Ascending aorta (tissue), 2 donors: ENCODE measurements at regions of chr10 and their contacts with region 1.

Region 1: GRCh38 chr10:125060826-125061556 is 99.4 kb downstream of the CTBP2 start:
- DNase-seq: peak; percentile 67 to 96
- H3K4me3 ChIP-seq: peak overlapping the region in 1 of 2 donors; percentile 47
- H3K27ac ChIP-seq: peak overlapping the region; percentile 99
- H3K4me1 ChIP-seq: peaks cover 59 to 90% of the 10 kb centered on the region in 2 donors
- H3K27me3 ChIP-seq: no peaks in the 10 kb centered on the region
- CTCF ChIP-seq: peak; percentile 81 to 91 (median 85)

Region 2: DNA sequence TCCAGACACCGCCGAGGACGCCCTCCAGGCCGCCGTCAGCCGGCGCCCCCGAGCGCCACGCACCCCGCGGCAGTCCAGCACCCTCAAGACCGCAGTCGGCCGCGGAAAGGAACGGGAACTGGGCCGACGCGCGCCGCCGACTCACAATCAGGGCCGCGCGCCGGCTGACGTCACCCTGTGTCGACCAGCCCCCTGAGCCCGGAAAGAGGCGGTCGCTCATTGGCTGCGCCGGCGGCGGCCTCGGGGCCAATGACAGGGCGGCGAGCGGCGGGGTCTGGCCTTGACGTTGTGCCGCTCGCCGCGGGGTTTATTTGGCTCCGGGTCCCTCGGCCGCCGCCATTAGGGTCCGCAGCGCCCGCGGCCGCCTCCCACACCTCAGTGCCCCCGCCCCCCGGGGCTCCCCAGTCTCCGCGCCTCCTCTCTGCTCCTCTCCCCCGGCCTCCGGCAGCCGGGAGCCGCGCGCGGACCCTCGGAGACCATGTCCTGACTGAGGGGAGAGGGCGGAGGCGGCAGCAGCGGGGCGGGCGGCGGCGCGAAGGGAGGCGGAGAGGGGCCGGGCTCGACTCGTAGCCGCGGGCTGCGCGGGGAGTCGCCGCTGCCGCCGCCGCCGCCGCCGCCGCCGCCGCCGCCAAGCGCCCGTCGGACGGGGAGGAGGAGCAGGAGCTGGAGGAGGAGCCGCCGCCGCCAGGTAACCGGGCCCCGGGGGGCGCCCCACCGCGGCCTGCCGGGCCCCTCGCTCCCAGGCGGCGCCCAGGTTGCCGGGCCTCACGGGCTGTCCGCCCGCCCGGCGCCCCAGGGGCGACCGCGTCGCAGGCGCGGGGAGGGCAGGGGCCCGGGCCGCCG is 144.2 kb before region 1 on chr10:
- intact Hi-C with region 1: loop called (anchors 1 kb)
- DNase-seq: peak; percentile 91 to 99
- H3K4me3 ChIP-seq: peak overlapping the region; percentile 95 to 96
- H3K27ac ChIP-seq: peak overlapping the region; percentile 98
- H3K4me1 ChIP-seq: peaks cover 3 to 29% of the 10 kb centered on the region in 2 donors
- H3K27me3 ChIP-seq: no peaks in the 10 kb centered on the region
- CTCF ChIP-seq: peak in 1 of 3 experiments; percentile 6

Region 3: DNA sequence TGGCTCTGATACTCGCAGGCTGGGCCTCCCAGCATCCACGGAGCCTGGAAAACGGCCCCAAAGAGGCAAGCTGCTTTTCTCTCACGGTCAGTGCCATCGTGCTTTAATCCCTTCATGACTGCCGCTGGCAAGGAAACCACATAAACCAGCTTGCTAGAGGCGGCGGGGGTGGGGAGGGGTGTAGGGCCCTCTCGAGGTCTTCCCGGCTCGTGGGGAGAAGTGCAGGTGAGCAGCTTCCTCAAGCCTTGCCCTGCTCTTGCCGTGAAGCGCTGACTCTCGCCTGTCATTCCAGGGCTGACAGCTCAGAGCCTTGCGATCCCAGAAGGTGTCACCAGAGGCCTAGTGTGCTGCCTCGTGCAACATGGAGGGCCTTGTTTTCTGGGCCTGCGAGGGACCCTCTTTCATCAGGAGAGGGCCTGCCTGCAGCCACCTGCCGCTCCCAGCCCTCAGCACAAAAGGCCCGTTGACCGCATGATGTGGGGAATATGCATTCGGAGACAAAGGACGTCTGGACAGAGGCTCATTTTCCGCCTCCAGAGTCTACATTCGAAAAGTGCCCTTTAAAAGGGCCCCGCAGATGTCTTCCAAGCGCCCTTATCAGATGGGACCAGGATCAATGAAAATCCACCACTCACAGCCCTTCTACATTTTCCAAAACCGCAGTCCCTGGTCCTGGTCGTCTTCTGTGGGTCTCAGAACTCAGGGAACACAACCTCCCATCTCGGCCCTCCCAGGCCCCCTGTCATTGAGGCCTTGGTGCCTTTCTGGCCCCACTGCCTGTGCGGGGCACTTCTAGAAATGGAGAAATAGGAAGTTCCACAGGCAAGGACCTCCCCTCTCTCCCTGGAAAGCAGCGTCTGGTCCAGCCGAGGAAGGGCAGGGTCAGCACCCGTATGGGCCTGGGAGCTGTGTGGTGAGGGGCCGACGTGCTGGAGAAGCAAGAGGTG is 60.4 kb before region 1 on chr10:
- intact Hi-C with region 1: loop called (anchors 2 kb)
- DNase-seq: peak in 1 of 2 donors; percentile 70
- H3K4me3 ChIP-seq: peak overlapping the region; percentile 34 to 54
- H3K27ac ChIP-seq: peak overlapping the region; percentile 94 to 98
- H3K4me1 ChIP-seq: peaks cover 35 to 57% of the 10 kb centered on the region in 2 donors
- H3K27me3 ChIP-seq: no peaks in the 10 kb centered on the region
- CTCF ChIP-seq: peak in 2 of 3 experiments; percentile 14 to 29

Region 4: DNA sequence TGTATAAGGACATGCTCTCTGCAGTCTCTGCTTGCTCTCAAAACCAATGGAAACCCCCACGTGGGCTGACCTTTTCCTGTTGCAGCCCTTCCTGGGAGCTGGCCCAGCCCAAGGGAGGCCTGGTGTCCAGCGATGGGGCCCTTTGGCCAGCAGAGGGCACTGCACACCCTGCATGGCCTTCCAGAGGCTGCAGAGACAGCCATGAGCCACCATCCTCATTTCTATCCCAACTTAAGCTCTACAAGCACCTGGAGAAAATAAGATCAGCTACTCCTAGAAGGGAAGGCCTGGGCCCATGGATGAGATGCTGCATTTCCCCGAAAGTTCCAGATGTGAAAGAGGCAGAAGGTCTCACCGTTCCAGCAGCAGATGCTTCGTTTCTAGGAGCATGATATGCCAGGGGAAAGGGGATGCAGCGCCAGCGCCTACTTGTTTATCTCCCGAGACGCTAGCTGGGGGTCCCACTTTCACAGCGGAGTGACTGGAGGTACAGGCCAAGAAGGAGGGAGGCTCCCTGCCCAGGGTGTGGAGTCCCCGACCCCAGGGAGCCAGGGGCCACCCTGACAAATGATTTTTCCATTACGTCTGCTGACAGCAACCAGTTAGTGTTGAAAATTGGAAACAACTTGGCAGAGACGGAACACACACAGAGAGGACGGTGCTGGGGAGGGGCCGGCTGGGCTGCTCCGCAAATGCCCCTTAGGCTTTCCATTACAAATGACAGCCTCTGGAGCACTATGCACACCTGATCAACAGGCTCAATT is 12.7 kb before region 1 on chr10:
- intact Hi-C with region 1: loop called (anchors 1 kb)
- DNase-seq: peak; percentile 24 to 92
- H3K4me3 ChIP-seq: peak overlapping the region in 1 of 2 donors; percentile 45
- H3K27ac ChIP-seq: peak overlapping the region; percentile 55 to 67
- H3K4me1 ChIP-seq: peaks cover 22 to 67% of the 10 kb centered on the region in 2 donors
- H3K27me3 ChIP-seq: no peaks in the 10 kb centered on the region
- CTCF ChIP-seq: peak; percentile 92 to 97 (median 96)

Region 5: GRCh38 chr10:125144693-125145623 is 84.0 kb after region 1 on chr10:
- intact Hi-C with region 1: loop called (anchors 2 kb)
- DNase-seq: no peak
- H3K4me3 ChIP-seq: no peak overlapping the region
- H3K27ac ChIP-seq: peak overlapping the region; percentile 30 to 89
- H3K4me1 ChIP-seq: peaks cover 29 to 71% of the 10 kb centered on the region in 2 donors
- H3K27me3 ChIP-seq: no peaks in the 10 kb centered on the region
- CTCF ChIP-seq: peak; percentile 22 to 52 (median 24)

Region 6: GRCh38 chr10:125411724-125412123 is 350.7 kb after region 1 on chr10:
- intact Hi-C with region 1: no loop called
- DNase-seq: no peak
- H3K4me3 ChIP-seq: no peak overlapping the region
- H3K27ac ChIP-seq: no peak overlapping the region
- H3K4me1 ChIP-seq: no peaks in the 10 kb centered on the region
- H3K27me3 ChIP-seq: no peaks in the 10 kb centered on the region
- CTCF ChIP-seq: no peak